ENCODE measurements at regions of chr7 and their contacts with region 1.

Region 1: GRCh38 chr7:33109005-33109757 is at the start of gene RP9:
- DNase-seq: peak; percentile 94
- H3K4me3 Mint-ChIP-seq: peak within 1 kb of the TSS; percentile 97
- H3K27ac Mint-ChIP-seq: peak within 1 kb of the TSS; percentile 84
- H3K4me1 Mint-ChIP-seq: peaks cover 25% of the 10 kb centered on the region
- H3K27me3 Mint-ChIP-seq: peaks cover 28% of the 10 kb centered on the region
- total RNA-seq, gene RP9: 23.2 and 25.1 TPM in 2 replicates

Region 2: DNA sequence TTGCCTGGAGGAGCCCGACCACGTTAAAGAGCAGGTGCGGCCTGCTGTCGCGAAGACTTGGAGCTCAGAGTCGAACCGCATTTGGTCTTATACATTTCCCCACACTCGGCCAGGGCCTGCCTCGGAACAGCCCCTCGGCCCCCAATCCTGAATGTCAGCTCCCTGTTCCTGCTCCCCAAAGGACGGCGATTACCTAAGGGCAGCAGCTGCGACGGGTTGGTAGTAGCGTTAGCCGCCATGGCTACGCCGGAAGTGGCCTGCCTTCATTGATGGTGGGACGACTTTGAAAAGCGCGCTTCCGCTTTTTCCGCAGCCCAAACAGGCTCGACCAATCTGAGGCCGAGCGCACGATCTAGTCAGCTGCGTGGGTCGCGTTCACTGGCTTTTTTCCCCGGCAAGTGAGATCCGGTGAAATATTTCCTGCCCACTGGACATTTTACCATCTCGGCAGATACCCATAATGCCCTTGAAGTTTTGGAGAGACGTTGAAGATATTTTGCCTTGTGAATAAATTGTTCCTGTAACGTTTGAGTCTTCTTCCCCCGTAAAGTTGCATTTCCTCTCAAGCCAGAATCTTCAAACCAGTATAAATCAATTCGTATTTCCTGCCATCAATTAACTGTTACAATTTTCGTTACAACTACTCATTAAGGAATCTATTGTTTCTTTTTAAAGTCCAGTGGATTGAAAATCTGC is 618.9 kb before region 1 on chr7 and contains the start of gene LSM5:
- intact Hi-C with region 1: loop called (anchors 2 kb)
- DNase-seq: peak; percentile 97
- H3K4me3 Mint-ChIP-seq: peak within 1 kb of the TSS; percentile 91
- H3K27ac Mint-ChIP-seq: peak within 1 kb of the TSS; percentile 95
- H3K4me1 Mint-ChIP-seq: peaks cover 22% of the 10 kb centered on the region
- H3K27me3 Mint-ChIP-seq: no peaks in the 10 kb centered on the region
- total RNA-seq, gene LSM5: 92.9 and 99.2 TPM in 2 replicates

Region 3: GRCh38 chr7:32803406-32804141 is 305.6 kb before region 1 on chr7:
- intact Hi-C with region 1: loop called (anchors 1 kb)
- DNase-seq: no peak
- H3K4me3 Mint-ChIP-seq: no peak overlapping the region
- H3K27ac Mint-ChIP-seq: no peak overlapping the region
- H3K4me1 Mint-ChIP-seq: no peaks in the 10 kb centered on the region
- H3K27me3 Mint-ChIP-seq: peaks cover 5% of the 10 kb centered on the region

Region 4: GRCh38 chr7:32957326-32958045 is 151.7 kb before region 1 on chr7 and contains the start of gene FKBP9:
- intact Hi-C with region 1: loop called (anchors 5 kb)
- DNase-seq: peak; percentile 75
- H3K4me3 Mint-ChIP-seq: peak within 1 kb of the TSS; percentile 84
- H3K27ac Mint-ChIP-seq: no peak within 1 kb of the TSS
- H3K4me1 Mint-ChIP-seq: peaks cover 3% of the 10 kb centered on the region
- H3K27me3 Mint-ChIP-seq: peaks cover 25% of the 10 kb centered on the region
- total RNA-seq, gene FKBP9: 0.93 and 1.3 TPM in 2 replicates

Region 5: DNA sequence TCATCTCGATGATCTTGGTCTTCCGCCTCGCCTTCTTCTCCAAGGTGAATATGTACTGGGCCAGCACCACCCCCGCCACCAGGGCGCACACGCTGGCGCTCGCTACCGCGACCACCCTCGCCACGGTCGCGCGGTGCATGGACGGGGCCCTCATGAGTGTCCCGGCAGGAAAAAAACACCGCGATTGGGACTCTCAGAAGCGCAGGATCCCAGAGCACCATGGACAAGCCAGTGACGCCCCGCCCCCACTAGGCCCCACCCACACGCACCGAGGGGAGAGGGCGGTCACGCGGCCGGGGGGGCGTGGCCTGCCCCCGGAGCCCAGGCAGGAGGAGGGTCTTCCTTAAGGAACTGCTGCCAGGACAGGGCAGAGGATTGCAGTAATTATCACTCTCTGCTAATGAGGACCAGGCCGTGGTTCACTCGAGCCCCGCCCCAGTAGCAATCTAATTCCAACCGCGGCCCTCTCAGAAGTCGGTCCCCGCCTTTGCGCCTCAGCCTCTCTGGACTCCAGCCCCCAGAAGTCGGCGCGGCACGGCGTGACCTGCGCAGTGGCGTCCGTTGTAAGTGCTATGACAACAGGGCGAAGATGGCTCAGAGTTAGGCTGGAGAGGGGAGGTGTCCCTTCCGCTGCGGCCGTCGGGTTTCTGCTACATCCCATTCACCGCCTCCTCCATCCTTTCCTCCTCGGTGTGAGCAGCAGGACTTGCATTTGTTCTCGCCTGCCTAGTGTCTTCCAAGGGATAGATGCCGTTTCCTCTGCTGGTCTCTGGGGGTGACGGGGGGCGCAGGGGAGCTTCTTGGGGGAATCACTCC is 20.0 kb after region 1 on chr7 and contains the start of gene BBS9:
- intact Hi-C with region 1: loop called (anchors 1 kb)
- DNase-seq: peak; percentile 97
- H3K4me3 Mint-ChIP-seq: peak within 1 kb of the TSS; percentile 98
- H3K27ac Mint-ChIP-seq: peak within 1 kb of the TSS; percentile 91
- H3K4me1 Mint-ChIP-seq: peaks cover 15% of the 10 kb centered on the region
- H3K27me3 Mint-ChIP-seq: peaks cover 5% of the 10 kb centered on the region
- total RNA-seq, gene BBS9: 4.2 and 4.3 TPM in 2 replicates